Activated T-helper 1 cell treated with anti-CD3 and anti-CD28 coated beads, Interleukin-12 subunit alpha, Interleukin-12 subunit beta, Interleukin-2, Interleukin-4 antibody, amounts not matched to agents 30 ng/mL and 10 ng/mL and 1 ng/mL, durations not matched to agents 14 hours and 24 hours and 36 hours (primary cell): ENCODE measurements at regions of chr18 and their contacts with region 1.

Region 1: DNA sequence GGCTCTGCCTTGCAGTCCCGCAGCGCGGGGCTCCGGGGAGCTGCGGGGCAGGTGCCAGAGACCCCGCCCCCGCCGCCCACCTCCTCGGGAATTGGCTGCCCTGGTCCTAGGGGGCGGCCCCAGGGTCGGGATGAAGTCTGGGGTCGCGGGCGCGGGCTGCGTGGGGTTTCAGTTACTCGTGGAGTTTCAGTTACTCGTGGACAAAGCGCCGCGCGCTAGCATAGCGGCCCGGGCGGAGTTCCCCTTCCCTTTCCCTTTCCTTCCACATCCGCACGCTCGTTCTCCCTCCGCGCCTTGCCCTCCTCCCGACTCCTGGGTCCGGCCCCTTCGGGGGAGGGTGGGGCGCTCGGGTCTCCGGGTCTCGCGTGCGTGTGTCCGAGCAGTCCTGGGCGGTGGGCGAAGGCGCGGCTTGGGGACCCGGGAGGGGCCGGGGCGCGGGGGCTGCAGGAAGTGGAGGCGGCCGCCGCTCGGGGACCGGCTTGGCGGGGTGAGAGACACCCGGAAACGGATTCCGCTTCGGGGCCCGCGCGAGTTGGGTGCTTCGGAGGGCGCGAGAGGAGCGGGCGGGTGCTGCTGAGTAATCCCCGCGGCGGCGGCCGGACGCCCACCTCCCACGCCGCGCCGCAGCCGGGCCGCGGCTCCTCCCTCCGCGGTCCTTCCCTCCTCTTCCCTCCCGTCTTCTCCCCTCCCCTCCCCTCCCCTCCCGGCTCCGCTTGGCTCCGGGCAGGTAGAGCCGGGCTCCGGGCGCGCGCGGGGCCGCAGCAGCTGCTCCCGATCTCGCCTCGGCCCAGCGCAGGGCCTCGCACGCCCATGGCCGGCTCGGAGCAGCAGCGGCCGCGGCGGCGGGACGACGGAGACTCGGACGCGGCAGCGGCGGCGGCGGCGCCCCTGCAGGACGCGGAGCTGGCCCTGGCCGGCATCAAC is at the start of gene TTC39C:
- DNase-seq: peak; percentile 79
- H3K4me3 Mint-ChIP-seq: peak within 1 kb of the TSS; percentile 92
- H3K27ac Mint-ChIP-seq: peak within 1 kb of the TSS; percentile 86
- H3K4me1 Mint-ChIP-seq: peaks cover 77% of the 10 kb centered on the region
- H3K27me3 Mint-ChIP-seq: no peaks in the 10 kb centered on the region
- total RNA-seq, gene TTC39C: 28.8 and 31.8 TPM in 2 replicates

Region 2: DNA sequence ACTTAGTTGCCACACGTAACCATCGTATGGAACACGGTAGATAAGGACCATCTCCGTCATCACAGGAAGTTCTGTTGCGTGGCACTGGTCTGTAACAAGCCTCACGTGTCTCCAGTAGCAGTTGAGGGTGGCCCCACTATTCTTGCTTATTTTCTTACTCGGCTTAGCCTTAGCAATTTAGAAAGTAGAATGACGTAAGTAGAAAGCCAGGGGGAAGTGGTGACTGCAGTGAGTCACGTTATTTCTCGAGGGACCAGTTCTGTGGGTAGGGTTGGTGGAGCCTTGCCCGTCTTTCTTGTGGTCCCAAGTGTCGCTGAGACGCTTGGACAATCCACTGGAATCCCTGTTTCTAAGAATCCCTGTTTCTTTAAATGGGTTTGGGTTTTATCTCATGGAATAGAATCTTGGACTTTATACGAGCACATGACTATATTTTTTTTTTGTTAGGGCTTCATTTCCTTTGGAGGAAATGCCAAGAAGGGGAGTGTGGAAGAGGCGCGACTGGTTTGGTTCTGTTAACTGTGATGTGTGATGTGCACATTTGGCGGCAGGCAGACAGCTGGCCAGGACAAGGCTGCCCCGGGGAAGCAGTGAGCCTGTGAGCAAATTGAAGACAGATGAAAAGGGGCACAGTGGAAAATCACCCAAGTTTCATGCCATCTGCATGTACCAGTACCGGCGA is 782.8 kb before region 1 on chr18:
- intact Hi-C with region 1: loop called (anchors 10 kb)
- DNase-seq: peak; percentile 80
- H3K4me3 Mint-ChIP-seq: peak overlapping the region; percentile 72
- H3K27ac Mint-ChIP-seq: peak overlapping the region; percentile 89
- H3K4me1 Mint-ChIP-seq: peaks cover 64% of the 10 kb centered on the region
- H3K27me3 Mint-ChIP-seq: peaks cover 8% of the 10 kb centered on the region

Region 3: DNA sequence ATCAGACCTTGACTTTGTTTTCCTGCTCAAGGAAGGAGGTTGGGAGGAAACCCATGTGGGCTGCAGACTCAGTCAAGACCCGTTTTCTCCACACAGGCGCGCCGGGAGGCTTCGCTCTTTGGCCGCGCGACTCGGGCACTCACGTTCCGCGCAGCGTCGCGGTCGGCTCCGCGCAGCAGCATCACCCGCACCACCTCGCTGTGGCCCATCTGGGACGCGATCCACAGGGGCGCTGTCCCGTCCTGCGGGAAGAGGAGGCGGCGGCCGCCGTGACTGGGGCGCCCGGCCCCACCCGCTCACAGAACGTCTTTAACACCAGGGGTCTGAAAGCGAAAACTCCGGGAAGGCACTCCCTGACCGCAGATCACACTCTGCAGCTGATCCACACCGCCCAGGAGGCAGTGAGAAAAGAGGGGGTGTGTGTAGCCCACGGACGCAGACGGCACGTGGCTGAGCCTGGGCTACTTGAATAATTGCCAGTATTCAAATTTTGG is 394.9 kb before region 1 on chr18:
- intact Hi-C with region 1: loop called (anchors 5 kb)
- DNase-seq: no peak
- H3K4me3 Mint-ChIP-seq: peak overlapping the region; percentile 22
- H3K27ac Mint-ChIP-seq: no peak overlapping the region
- H3K4me1 Mint-ChIP-seq: peaks cover 15% of the 10 kb centered on the region
- H3K27me3 Mint-ChIP-seq: peaks cover 53% of the 10 kb centered on the region

Region 4: GRCh38 chr18:23943104-23943503 is 71.2 kb before region 1 on chr18:
- intact Hi-C with region 1: loop called (anchors 2 kb)
- DNase-seq: no peak
- H3K4me3 Mint-ChIP-seq: peak overlapping the region; percentile 3
- H3K27ac Mint-ChIP-seq: no peak overlapping the region
- H3K4me1 Mint-ChIP-seq: peaks cover 26% of the 10 kb centered on the region
- H3K27me3 Mint-ChIP-seq: peaks cover 33% of the 10 kb centered on the region

Region 5: GRCh38 chr18:24054130-24054529 is 39.8 kb after region 1 on chr18:
- intact Hi-C with region 1: loop called (anchors 1 kb)
- DNase-seq: no peak
- H3K4me3 Mint-ChIP-seq: peak overlapping the region; percentile 12
- H3K27ac Mint-ChIP-seq: peak overlapping the region; percentile 74
- H3K4me1 Mint-ChIP-seq: peaks cover 76% of the 10 kb centered on the region
- H3K27me3 Mint-ChIP-seq: no peaks in the 10 kb centered on the region

Region 6: GRCh38 chr18:24176727-24177416 is 162.5 kb after region 1 on chr18:
- intact Hi-C with region 1: loop called (anchors 5 kb)
- DNase-seq: no peak
- H3K4me3 Mint-ChIP-seq: no peak overlapping the region
- H3K27ac Mint-ChIP-seq: no peak overlapping the region
- H3K4me1 Mint-ChIP-seq: peaks cover 10% of the 10 kb centered on the region
- H3K27me3 Mint-ChIP-seq: no peaks in the 10 kb centered on the region